ENCODE measurements at regions of chr1 and their contacts with region 1.

Region 1: GRCh38 chr1:1122078-1122811 is 6.4 kb upstream of the C1orf159 start:
- DNase-seq: peak; percentile 66 to 84
- H3K4me3 ChIP-seq: peak overlapping the region in 1 of 2 donors; percentile 19
- H3K27ac ChIP-seq: no peak overlapping the region
- H3K4me1 ChIP-seq: peaks cover 0 to 14% (median 4%) of the 10 kb centered on the region in 4 donors
- H3K27me3 ChIP-seq: peaks cover 0 to 44% of the 10 kb centered on the region in 2 donors
- CTCF ChIP-seq: peak; percentile 78 to 87

Region 2: GRCh38 chr1:890661-891060 is 231.6 kb before region 1 on chr1:
- intact Hi-C with region 1: no loop called
- DNase-seq: no peak
- H3K4me3 ChIP-seq: no peak overlapping the region
- H3K27ac ChIP-seq: no peak overlapping the region
- H3K4me1 ChIP-seq: no peaks in the 10 kb centered on the region
- H3K27me3 ChIP-seq: peaks cover 0 to 40% of the 10 kb centered on the region in 2 donors
- CTCF ChIP-seq: no peak

Region 3: GRCh38 chr1:1231400-1232223 is 109.4 kb after region 1 on chr1 and contains the start of gene SDF4:
- intact Hi-C with region 1: loop called (anchors 5 kb)
- DNase-seq: peak; percentile 95 to 97
- H3K4me3 ChIP-seq: peak within 1 kb of the TSS; percentile 94 to 99
- H3K27ac ChIP-seq: peak within 1 kb of the TSS; percentile 96 to 99
- H3K4me1 ChIP-seq: peaks cover 0 to 42% (median 32%) of the 10 kb centered on the region in 4 donors
- H3K27me3 ChIP-seq: no peaks in the 10 kb centered on the region
- CTCF ChIP-seq: no peak

Region 4: DNA sequence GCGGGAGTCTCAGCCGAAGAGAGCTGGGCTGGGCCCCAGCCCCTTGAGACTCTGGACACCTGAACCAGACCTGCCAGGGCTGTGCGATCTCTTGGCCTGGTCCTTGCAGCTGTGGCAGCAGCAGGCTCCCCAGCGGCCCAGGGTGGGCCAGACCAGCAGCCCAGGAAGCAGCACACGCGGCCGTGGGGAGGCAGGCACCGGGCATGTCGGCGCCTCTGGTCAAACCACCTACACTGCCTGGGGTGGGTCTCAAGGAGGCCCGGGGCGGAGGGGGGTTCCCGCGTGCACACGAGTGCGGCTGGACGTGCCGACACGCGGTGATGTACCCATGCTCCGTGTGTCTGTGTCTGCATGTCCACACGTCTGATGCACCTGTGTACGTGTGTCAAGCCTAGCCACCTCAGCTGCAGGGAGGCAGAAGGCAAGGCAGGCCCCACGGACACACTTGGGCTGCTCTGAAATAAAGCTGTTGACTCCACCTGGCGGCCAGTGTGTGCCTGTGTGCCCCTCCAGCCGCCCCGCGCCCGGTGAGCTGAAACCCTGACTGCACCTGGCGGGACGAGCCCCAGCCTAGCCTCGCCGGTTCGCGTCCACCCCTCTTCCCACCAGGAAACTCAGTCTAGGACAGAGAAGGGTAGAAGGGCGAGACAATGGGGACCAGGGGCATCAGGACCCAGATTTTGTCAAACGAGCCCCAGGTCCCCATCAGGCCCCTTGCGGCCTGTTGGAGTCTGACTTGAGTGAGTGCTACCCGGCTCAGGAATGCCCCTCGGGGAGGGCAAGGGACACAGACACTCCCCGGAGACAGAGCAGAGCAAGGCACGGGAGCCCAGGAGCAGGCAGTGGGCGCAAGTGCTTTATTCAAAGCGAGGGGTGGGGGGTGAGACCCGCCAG is 169.6 kb after region 1 on chr1:
- intact Hi-C with region 1: loop called (anchors 5 kb)
- DNase-seq: peak in 1 of 2 donors; percentile 44
- H3K4me3 ChIP-seq: no peak overlapping the region
- H3K27ac ChIP-seq: no peak overlapping the region
- H3K4me1 ChIP-seq: peaks cover 0 to 25% (median 7%) of the 10 kb centered on the region in 4 donors
- H3K27me3 ChIP-seq: peaks cover 0 to 28% of the 10 kb centered on the region in 2 donors
- CTCF ChIP-seq: peak; percentile 51 to 59